ENCODE measurements at regions of chr7 and their contacts with region 1.

Region 1: DNA sequence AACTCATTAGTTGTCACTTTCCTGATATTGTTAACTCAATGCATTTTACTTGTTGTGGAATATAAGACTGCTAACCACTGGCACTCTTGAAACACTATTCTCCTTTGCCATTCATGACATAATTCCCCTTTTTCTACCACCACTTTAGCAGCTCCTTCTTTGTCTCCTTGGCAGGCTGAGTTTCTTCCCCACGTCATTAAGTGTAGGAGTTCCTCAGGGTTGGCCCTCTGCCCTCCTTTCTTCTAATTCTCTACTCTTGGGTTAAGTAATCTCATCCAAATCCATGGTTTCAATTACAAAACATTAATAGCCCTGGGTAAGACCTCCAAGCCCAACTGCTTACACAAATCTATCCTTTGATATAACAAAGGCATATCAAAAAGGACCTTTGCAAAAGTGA is 175.1 kb downstream of the HGF start:
- DNase-seq: no peak
- H3K4me3 ChIP-seq: no peak overlapping the region
- H3K27ac ChIP-seq: no peak overlapping the region
- H3K4me1 ChIP-seq: no peaks in the 10 kb centered on the region
- H3K27me3 ChIP-seq: no peaks in the 10 kb centered on the region
- CTCF ChIP-seq: no peak

Region 2: GRCh38 chr7:81549484-81550016 is 45.2 kb before region 1 on chr7:
- CTCF ChIA-PET with region 1: no interaction called
- POLR2A ChIA-PET with region 1: no interaction called
- intact Hi-C with region 1: loop called (anchors 5 kb)
- DNase-seq: no peak
- H3K4me3 ChIP-seq: no peak overlapping the region
- H3K27ac ChIP-seq: no peak overlapping the region
- H3K4me1 ChIP-seq: no peaks in the 10 kb centered on the region
- H3K27me3 ChIP-seq: no peaks in the 10 kb centered on the region
- CTCF ChIP-seq: no peak

Region 3: DNA sequence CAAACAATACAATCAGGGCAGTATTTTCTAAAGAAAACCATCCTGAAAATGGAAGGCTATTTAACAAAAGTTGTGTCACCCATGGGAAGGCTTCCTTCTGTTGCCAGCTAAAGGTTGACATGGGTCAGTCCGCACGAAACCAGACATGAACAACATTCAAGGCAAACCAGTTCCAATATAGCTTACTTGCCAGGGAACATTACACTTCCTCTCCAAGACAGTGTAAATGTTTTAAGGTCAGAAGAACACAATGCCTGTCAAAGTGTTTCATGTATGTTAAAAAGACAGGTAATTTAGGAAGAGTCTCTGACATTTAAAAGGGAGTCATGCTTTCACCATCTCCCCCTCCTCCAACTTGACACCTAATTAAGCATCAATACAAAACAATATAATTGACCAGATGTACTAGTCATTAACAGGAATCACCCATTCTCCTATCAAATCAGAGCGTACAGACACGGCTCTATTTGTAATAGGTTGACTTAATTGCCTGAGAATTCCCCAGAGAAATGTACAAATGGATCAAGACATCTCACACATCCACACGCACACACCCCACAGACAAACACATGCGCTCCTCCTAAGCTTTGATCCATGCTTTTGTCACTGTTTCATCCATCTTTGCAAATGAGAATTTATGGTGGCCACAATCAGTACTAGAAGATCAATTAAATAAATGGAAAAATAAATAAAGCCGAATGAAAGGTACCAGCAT is 779.3 kb after region 1 on chr7:
- CTCF ChIA-PET with region 1: no interaction called
- POLR2A ChIA-PET with region 1: no interaction called
- intact Hi-C with region 1: no loop called
- DNase-seq: no peak
- H3K4me3 ChIP-seq: no peak overlapping the region
- H3K27ac ChIP-seq: no peak overlapping the region
- H3K4me1 ChIP-seq: no peaks in the 10 kb centered on the region
- H3K27me3 ChIP-seq: no peaks in the 10 kb centered on the region
- CTCF ChIP-seq: no peak